H1 (cell line): ENCODE measurements at regions of chr3 and their contacts with region 1.

Region 1: DNA sequence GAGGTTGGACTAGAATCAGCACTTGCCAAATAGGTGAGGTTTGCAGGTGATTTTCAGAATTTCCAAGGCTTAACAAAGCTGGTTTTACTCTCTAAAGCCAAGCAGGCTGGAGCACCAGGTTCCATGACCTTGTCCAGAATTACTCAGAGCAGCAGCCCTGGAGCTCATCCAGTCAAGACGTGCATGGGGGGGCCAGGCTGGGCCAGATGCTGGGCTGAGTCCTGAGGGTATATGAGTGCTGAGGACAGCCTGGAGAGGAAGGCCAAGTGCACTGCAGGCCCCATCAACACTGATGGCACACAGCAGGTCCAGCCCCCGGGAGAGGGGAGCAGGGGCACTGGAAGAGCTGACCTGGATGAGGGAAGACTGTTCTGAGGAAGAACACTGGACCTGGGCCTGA is 3.0 kb upstream of the TXNRD3 start:
- DNase-seq: no peak
- H3K4me3 ChIP-seq: no peak overlapping the region
- H3K27ac ChIP-seq: no peak overlapping the region
- H3K4me1 ChIP-seq: peaks cover 0 to 2% (median 0%) of the 10 kb centered on the region in 4 experiments; a peak in 2 of 7 replicates
- H3K27me3 ChIP-seq: peaks cover 0 to 26% (median 10%) of the 10 kb centered on the region in 4 experiments; a peak in 6 of 7 replicates
- CTCF ChIP-seq: no peak
- EP300 ChIP-seq: no peak
- POLR2A ChIP-seq: no peak
- RAD21 ChIP-seq: no peak

Region 2: DNA sequence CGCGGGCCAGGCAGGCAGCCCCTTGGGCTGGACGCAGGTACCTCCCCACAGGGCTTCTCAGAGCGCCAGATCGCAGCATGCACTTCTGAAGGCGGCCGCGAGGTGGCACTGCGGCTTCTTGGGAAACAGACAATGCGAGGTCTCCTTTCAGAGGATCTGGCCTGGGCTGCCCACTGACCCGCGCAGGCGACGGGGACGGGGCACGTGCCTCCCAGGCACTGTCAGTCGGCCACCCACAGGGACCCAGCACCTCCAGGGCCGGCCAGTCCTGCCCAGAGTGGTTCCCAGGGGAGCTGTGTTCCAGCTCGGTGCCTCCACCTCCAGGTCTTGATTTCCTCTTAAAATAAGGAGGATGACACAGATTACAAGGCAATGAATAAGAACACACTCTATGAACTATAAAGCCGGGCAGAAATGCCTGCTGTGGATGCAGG is 21.4 kb after region 1 on chr3:
- CTCF ChIA-PET with region 1: interaction called, 12 read pairs
- POLR2A ChIA-PET with region 1: no interaction called
- DNase-seq: peak; percentile 79 to 99
- H3K4me3 ChIP-seq: peak overlapping the region in 1 of 4 experiments; percentile 45; a peak in 1 of 8 replicates
- H3K27ac ChIP-seq: no peak overlapping the region
- H3K4me1 ChIP-seq: peaks cover 0 to 8% (median 6%) of the 10 kb centered on the region in 4 experiments; a peak in 5 of 7 replicates
- H3K27me3 ChIP-seq: peaks cover 2 to 19% (median 14%) of the 10 kb centered on the region in 4 experiments; a peak in 6 of 7 replicates
- CTCF ChIP-seq: peak; percentile 93 to 94 (median 94)
- EP300 ChIP-seq: no peak
- POLR2A ChIP-seq: no peak
- RAD21 ChIP-seq: peak; percentile 91 to 96

Region 3: DNA sequence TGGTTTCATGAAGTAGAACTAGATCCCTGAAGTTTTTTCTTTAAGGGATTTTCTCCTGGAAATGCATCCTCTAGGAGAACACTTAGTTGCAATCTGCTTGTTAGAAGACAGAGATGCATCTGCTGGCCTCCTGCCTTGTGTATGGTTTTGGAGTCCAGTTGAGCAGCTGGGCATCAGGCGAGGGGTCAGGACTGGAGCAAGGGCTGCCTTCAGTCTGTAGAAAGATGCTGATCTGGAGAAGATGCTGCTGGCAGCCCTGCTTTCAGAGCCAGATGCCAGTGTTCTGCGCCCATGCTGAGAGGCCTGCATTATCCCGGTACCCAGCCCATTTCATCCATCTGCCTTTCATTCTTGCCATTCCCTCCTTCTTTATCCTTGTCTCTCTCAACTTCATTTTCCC is 123.5 kb after region 1 on chr3:
- CTCF ChIA-PET with region 1: no interaction called
- POLR2A ChIA-PET with region 1: no interaction called
- DNase-seq: no peak
- H3K4me3 ChIP-seq: no peak overlapping the region
- H3K27ac ChIP-seq: no peak overlapping the region
- H3K4me1 ChIP-seq: peaks cover 9 to 18% (median 12%) of the 10 kb centered on the region in 4 experiments
- H3K27me3 ChIP-seq: no peaks in the 10 kb centered on the region
- CTCF ChIP-seq: no peak
- EP300 ChIP-seq: no peak
- POLR2A ChIP-seq: no peak
- RAD21 ChIP-seq: no peak